ENCODE measurements at regions of chr19 and their contacts with region 1.

Region 1: DNA sequence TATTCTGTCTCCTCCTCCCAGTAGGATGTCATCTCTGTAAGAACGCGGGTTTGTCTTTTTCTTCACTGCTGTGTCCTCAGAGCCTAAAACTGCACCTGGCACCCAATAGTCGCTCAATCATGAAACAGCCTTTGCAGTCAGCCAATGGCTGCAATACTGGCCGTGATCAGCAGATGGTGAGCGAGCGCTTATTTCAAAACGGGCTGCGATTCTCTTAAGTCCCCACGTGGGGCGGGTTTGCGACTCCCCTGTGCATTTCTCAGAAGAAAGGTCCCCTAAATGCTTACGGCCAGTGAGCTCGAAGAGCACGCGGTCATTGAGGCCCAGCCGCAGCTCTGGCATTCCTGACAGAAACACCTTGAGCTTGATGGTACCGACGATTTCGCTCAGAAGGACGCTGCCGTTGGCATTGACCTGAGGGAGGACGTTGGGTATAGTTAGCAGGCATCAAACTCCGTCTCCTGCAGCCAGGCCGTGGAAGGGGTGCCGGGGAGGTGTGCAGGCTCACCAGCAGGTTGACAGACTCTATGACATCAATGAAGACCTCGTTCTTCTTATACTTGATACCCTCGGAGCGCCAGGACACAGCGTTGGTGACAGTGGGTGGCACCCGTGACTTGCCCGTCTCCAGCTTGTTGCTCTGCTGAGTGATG is 6.0 kb downstream of the AP1M2 start:
- DNase-seq: peak; percentile 98
- ATAC-seq: peak; percentile 100
- H3K4me3 Mint-ChIP-seq: no peak overlapping the region
- H3K27ac Mint-ChIP-seq: no peak overlapping the region
- H3K4me1 Mint-ChIP-seq: peaks cover 7% of the 10 kb centered on the region
- H3K27me3 Mint-ChIP-seq: no peaks in the 10 kb centered on the region
- CTCF ChIP-seq: peak; percentile 100

Region 2: GRCh38 chr19:10551698-10552301 is 29.3 kb before region 1 on chr19:
- CTCF ChIA-PET with region 1: interaction called, 26 read pairs
- POLR2A ChIA-PET with region 1: no interaction called
- intact Hi-C with region 1: no loop called
- DNase-seq: peak; percentile 73
- ATAC-seq: peak; percentile 14
- H3K4me3 Mint-ChIP-seq: no peak overlapping the region
- H3K27ac Mint-ChIP-seq: peak overlapping the region; percentile 92
- H3K4me1 Mint-ChIP-seq: peaks cover 54% of the 10 kb centered on the region
- H3K27me3 Mint-ChIP-seq: no peaks in the 10 kb centered on the region
- CTCF ChIP-seq: no peak

Region 3: GRCh38 chr19:10602330-10603083 is 21.4 kb after region 1 on chr19:
- CTCF ChIA-PET with region 1: interaction called, 50 read pairs
- POLR2A ChIA-PET with region 1: interaction called, 9 read pairs
- intact Hi-C with region 1: no loop called
- DNase-seq: peak; percentile 93
- ATAC-seq: peak; percentile 86
- H3K4me3 Mint-ChIP-seq: peak overlapping the region; percentile 96
- H3K27ac Mint-ChIP-seq: peak overlapping the region; percentile 96
- H3K4me1 Mint-ChIP-seq: peaks cover 21% of the 10 kb centered on the region
- H3K27me3 Mint-ChIP-seq: no peaks in the 10 kb centered on the region
- CTCF ChIP-seq: no peak

Region 4: DNA sequence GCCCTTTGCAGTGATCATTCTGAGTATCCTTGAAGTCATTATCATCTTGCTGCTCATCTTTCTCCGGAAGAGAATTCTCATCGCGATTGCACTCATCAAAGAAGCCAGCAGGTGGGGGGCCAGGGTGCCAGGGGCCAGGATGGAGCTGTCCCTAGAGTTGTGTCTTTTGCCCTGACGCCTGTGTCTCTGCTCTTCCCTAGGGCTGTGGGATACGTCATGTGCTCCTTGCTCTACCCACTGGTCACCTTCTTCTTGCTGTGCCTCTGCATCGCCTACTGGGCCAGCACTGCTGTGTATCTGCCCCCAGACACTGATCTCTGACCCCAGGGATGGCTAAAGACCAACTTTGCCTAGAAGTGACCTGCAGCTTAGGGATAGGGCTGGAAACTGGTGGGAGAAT is 53.9 kb after region 1 on chr19:
- CTCF ChIA-PET with region 1: interaction called, 409 read pairs
- POLR2A ChIA-PET with region 1: no interaction called
- intact Hi-C with region 1: no loop called
- DNase-seq: no peak
- ATAC-seq: no peak
- H3K4me3 Mint-ChIP-seq: no peak overlapping the region
- H3K27ac Mint-ChIP-seq: peak overlapping the region; percentile 55
- H3K4me1 Mint-ChIP-seq: peaks cover 8% of the 10 kb centered on the region
- H3K27me3 Mint-ChIP-seq: no peaks in the 10 kb centered on the region
- CTCF ChIP-seq: no peak

Region 5: DNA sequence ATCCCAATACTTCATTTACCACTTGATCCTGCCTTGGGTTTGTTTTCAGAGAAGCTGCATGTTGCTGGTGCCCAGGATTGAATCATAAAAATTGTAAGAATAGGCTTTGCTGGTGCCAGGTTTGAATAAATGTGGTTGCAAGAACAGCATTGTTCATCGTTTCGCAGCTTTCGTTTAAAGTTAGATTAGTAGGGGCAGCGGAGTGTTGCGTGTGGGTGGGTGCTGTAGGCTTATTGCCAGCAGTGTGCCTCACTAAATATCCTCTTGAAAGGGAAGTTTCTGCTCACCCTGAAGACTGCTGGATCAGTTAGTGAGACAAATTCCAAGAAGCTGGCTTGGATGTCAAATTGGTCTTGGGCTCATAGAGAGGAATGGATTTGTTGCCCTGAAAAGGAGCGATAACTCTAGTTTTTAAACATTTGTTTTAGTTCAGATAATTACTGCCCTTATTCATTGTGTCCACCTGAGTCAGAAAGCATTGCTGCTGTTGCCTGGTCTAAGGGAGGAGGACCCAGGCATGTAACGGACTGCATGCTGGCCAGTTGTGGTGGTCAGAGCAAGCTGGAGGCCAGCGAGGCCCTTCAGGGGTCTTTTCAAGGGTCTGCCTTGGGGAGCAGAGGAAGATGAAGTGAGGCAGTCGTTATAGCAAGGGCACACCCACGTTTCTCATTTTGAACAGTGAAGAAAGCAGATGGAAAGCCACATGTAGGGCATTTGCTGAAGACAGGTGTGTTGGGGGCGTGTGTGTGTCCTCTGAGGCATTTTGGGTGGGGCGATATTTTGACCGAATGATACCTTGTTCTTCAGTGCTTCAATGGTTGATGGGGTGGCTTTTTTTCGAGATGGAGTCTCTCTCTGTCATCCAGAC is 81.5 kb after region 1 on chr19:
- CTCF ChIA-PET with region 1: interaction called, 14 read pairs
- POLR2A ChIA-PET with region 1: no interaction called
- intact Hi-C with region 1: no loop called
- DNase-seq: peak; percentile 68
- ATAC-seq: peak; percentile 71
- H3K4me3 Mint-ChIP-seq: peak overlapping the region; percentile 21
- H3K27ac Mint-ChIP-seq: peak overlapping the region; percentile 74
- H3K4me1 Mint-ChIP-seq: peaks cover 53% of the 10 kb centered on the region
- H3K27me3 Mint-ChIP-seq: no peaks in the 10 kb centered on the region
- CTCF ChIP-seq: no peak

Region 6: DNA sequence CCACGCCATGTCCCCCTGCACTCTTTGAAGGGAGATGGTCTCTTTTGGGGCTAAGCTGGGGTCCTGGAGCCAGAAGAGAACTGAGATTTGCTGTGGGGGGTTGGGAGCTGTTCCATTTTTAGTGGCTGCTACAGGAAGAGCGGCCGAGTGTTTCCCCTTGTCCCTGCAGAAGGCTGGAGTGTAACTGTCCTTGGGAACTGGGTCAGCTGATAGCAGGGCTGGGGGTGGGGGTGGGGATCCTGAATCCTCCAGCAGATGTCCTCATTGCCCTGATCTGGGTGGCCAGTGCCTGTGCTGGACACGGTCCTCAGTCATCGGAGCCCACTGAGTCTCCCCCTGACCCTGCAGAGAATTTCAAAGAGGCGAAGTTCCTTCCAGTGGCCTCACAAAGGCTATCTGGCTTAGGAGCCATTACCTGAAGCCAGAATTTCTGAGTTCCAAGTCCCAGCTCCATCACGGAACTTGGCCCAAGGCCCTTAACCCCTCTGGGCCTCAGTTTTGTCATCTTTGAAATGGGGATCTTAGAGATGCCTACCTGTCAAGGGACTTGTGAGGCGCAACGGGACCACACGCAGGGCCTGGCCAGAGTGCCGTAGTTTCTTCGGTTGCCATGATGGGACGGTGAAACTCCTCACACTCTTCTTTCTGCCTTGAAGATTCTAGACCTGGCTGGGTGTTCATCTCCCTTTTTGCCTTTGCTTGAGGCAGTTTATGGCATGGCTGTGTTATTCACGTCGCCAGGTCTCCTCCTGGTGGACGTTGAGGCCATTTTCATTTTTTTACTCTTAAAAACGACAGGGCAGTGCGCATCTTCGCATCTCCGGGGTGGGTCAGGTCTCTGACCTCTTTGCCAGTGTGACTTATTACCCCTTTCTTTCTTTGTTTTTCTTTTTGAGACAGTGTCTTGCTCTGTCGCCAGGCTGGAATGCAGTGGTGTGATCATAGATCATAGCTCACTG is 188.7 kb after region 1 on chr19:
- CTCF ChIA-PET with region 1: no interaction called
- POLR2A ChIA-PET with region 1: no interaction called
- intact Hi-C with region 1: no loop called
- DNase-seq: peak; percentile 35
- ATAC-seq: peak; percentile 42
- H3K4me3 Mint-ChIP-seq: no peak overlapping the region
- H3K27ac Mint-ChIP-seq: peak overlapping the region; percentile 57
- H3K4me1 Mint-ChIP-seq: peaks cover 15% of the 10 kb centered on the region
- H3K27me3 Mint-ChIP-seq: no peaks in the 10 kb centered on the region
- CTCF ChIP-seq: no peak

Measured in activated CD8-positive, alpha-beta T cell treated with anti-CD3 and anti-CD28 coated beads for 36 hours (primary cell).